Cardiac septum (tissue), 1 donor: ENCODE measurements at regions of chr6 and their contacts with region 1.

Region 1: DNA sequence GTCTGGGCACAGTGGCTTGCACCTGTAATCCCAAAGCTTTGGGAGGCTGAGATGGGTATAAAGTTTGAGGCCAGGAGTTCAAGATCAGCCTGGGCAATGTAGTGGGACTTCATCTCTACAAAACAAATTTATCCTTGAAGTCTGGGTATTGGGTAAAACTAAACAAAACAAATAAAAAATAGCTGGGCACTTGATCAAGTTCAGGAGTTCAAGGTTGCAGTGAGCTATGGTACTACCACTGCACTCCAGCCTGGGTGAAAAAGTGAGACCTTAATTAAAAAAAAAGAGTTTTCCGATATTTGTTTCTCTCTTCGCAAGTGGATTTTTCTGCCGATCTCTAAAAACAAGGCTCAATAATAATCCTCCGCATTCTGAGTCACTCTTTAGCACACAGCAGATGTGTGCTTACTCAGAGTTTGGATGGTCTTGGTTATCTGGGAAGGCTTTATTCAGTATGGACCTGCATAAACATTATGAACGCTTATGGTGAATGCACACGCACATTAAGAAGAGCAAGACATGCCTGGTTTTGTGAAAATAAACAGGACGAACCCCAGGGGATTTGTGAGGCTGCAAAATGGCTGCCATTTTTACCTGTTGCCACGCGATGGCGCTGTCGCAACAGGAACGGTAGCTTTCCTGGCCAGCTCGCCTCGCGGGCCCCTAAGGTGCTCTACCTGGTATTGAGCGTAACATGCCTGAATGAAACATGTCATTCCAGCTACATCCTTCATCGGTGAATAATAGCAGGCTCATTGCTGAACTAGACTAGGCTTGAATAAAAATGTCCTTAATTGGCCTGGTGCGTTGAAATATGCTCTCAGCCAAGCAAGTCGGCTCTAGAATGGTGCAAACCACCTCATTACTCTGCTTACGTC is 6.0 kb downstream of the OPN5 start:
- DNase-seq: no peak

Region 2: GRCh38 chr6:47836639-47837038 is 48.8 kb after region 1 on chr6:
- intact Hi-C with region 1: no loop called
- DNase-seq: no peak

Region 3: GRCh38 chr6:47936820-47937219 is 149.0 kb after region 1 on chr6:
- intact Hi-C with region 1: no loop called
- DNase-seq: no peak

Region 4: DNA sequence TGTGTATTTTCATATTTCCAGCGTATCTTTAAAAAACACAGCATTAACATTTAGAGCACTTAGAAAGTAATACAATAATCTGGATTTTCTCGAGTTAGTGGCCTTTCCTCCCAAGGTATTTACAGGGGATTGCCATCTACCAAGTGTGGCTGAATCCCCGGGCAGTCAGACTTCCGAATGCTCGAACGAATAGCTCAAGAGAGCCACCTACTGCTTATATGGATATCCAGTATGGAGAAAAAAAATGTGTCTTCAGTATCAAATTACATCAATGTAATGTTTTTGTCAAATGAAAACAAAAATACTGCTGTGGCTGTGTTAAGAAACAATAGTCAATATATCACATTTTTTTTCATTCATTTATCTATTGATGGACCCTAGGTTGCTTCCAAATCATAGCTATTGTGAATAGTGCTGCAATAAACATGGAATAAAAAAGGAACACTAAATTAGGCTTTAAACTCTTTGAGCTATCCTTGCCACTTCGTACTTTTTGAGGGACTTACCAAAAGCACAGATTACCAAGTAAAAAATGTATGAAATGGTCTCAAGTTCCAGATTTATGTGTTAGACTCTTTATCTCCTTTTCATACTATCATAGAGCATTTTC is 977.6 kb after region 1 on chr6:
- intact Hi-C with region 1: loop called (anchors 10 kb)
- DNase-seq: no peak

Region 5: GRCh38 chr6:49409951-49410542 is 1622.2 kb after region 1 on chr6:
- intact Hi-C with region 1: loop called (anchors 5 kb)
- DNase-seq: no peak